CD14-positive monocyte (primary cell): ENCODE measurements at regions of chr17 and their contacts with region 1.

Region 1: DNA sequence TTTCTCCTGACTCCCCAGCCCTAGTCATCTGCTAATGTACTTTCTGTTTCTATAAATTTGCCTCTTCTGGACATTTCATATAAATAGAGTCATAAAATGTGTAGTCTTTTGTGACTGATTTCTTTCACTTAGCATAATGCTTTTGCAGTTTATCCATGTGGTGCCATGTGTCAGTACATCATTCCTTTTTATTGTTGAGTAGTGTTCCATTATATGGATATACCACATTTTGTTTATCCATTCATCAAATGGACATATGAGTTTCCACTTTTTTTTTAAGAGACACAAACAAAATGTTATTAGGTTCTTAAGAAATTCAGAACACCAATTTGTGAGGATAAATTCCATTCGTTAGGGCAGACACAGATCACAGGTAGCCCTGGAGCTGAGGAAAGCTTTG is 11.0 kb downstream of the DBF4B start:
- DNase-seq: no peak
- H3K4me3 ChIP-seq: no peak overlapping the region
- H3K4me3 Mint-ChIP-seq: no peak overlapping the region
- H3K27ac ChIP-seq: no peak overlapping the region
- H3K27ac Mint-ChIP-seq: no peak overlapping the region
- H3K4me1 ChIP-seq: no peaks in the 10 kb centered on the region
- H3K4me1 Mint-ChIP-seq: no peaks in the 10 kb centered on the region
- H3K27me3 ChIP-seq: no peaks in the 10 kb centered on the region
- H3K27me3 Mint-ChIP-seq: peaks cover 0 to 2% (median 0%) of the 10 kb centered on the region in 3 donors
- CTCF ChIP-seq: no peak

Region 2: DNA sequence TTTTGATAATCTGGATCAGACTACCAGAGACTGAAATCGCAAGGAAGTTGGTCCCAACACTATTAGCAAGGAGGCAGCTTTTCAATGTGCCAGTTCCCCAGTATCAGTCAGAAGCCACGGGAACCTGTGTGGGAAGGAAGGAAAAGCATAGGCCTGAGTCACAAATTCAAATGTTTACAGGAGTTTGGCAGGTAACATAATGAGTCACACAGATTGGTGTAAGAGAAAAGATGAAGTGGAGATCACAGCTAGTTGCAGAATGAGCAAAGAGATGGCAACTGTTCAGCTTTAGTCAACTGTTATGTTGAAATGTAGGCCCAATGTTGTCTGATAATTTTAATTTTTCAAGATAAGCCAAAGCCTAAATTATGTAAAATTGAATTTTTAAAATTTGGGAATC is 301.9 kb before region 1 on chr17:
- intact Hi-C with region 1: loop called in 1 of 2 experiments (anchors 5 kb)
- DNase-seq: no peak
- H3K4me3 ChIP-seq: no peak overlapping the region
- H3K4me3 Mint-ChIP-seq: no peak overlapping the region
- H3K27ac ChIP-seq: no peak overlapping the region
- H3K27ac Mint-ChIP-seq: peak overlapping the region in 2 of 7 donors; percentile 3 to 11
- H3K4me1 ChIP-seq: no peaks in the 10 kb centered on the region
- H3K4me1 Mint-ChIP-seq: no peaks in the 10 kb centered on the region
- H3K27me3 ChIP-seq: no peaks in the 10 kb centered on the region
- H3K27me3 Mint-ChIP-seq: no peaks in the 10 kb centered on the region
- CTCF ChIP-seq: no peak